B cell (primary cell): ENCODE measurements at regions of chr12 and their contacts with region 1.

Region 1: DNA sequence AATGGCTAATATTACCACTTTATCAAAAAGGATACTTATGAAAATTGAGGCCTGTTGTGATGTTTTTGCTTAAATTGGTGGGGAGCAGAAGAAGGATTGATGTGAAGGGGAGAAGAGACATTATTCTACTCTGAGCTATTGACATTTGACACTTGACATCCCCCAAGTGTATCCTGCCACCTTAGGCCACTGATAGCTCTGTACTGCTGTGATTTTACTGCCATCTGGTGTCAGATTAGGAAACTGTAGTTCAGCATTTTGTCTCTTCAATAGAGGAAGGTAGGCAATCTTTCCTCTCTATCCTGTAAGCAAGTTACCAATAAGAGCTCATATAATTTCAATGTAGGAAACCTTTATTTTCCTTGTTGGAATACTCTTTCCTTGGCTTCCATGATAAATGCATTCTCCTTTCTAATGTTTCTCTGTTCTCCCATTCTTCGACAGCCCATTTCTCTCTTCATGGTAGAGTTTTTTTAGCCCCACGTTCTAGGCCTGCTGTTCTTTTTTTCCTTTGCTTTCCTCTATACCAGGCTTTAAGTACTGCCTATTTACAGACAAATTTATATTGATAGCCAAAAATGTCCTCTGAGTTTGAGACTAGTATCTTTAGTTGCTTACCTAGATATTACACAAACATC is 46.3 kb downstream of the PPHLN1 start:
- DNase-seq: peak; percentile 76
- ATAC-seq: peak; percentile 92
- H3K4me3 ChIP-seq: no peak overlapping the region
- H3K4me3 Mint-ChIP-seq: no peak overlapping the region
- H3K27ac ChIP-seq: no peak overlapping the region
- H3K27ac Mint-ChIP-seq: no peak overlapping the region
- H3K4me1 ChIP-seq: peaks cover 4 to 5% of the 10 kb centered on the region in 2 donors
- H3K4me1 Mint-ChIP-seq: peaks cover 14% of the 10 kb centered on the region
- H3K27me3 ChIP-seq: no peaks in the 10 kb centered on the region
- H3K27me3 Mint-ChIP-seq: no peaks in the 10 kb centered on the region
- CTCF ChIP-seq: peak; percentile 89

Region 2: GRCh38 chr12:41277116-41277945 is 1094.9 kb before region 1 on chr12:
- CTCF ChIA-PET with region 1: interaction called, 23 read pairs
- POLR2A ChIA-PET with region 1: no interaction called
- intact Hi-C with region 1: loop called (anchors 1 kb)
- DNase-seq: peak; percentile 44
- ATAC-seq: no peak
- H3K4me3 ChIP-seq: no peak overlapping the region
- H3K4me3 Mint-ChIP-seq: no peak overlapping the region
- H3K27ac ChIP-seq: no peak overlapping the region
- H3K27ac Mint-ChIP-seq: no peak overlapping the region
- H3K4me1 ChIP-seq: peaks cover 0 to 13% of the 10 kb centered on the region in 2 donors
- H3K4me1 Mint-ChIP-seq: no peaks in the 10 kb centered on the region
- H3K27me3 ChIP-seq: no peaks in the 10 kb centered on the region
- H3K27me3 Mint-ChIP-seq: peaks cover 9% of the 10 kb centered on the region
- CTCF ChIP-seq: peak; percentile 73

Region 3: GRCh38 chr12:42076976-42077375 is 295.3 kb before region 1 on chr12:
- CTCF ChIA-PET with region 1: no interaction called
- POLR2A ChIA-PET with region 1: no interaction called
- intact Hi-C with region 1: no loop called
- DNase-seq: no peak
- ATAC-seq: no peak
- H3K4me3 ChIP-seq: no peak overlapping the region
- H3K4me3 Mint-ChIP-seq: no peak overlapping the region
- H3K27ac ChIP-seq: no peak overlapping the region
- H3K27ac Mint-ChIP-seq: no peak overlapping the region
- H3K4me1 ChIP-seq: no peaks in the 10 kb centered on the region
- H3K4me1 Mint-ChIP-seq: no peaks in the 10 kb centered on the region
- H3K27me3 ChIP-seq: no peaks in the 10 kb centered on the region
- H3K27me3 Mint-ChIP-seq: no peaks in the 10 kb centered on the region
- CTCF ChIP-seq: no peak

Region 4: DNA sequence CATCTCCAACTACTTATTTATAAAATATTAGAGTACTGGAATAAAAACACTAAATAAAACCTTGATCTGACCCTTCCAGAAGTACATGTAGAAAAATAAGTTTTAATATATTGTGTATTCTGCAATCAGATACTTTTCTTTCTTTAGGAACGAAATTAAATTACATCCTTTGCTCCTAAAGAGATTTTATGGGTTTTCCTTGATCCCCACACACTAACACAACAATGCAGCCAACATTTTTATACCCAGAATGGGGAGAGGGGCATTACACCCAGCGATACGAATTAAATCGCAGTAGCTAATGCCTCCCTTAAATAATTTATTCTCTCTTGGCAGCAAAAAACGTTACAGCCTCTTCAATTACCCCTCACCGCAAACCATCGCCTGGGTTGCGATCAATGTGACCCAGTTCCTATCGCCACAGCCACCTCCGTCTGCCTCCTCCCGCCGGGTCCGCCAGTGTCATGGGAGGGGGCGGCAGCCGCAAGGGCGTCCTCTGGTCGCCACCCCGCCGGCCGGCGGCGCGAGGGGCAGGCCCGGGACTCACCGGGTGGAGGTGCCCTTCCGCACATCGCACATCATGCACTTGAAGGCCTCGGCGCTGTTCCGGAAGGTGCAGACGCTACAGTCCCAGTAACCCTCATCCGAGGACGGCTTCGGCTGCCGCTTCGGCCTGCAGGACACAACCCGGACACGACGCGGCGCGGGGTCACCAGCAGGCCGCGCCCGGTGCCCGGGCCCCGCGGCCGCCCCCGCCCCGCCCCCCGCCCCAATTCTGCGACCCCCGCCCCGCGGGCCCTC is 135.0 kb before region 1 on chr12:
- CTCF ChIA-PET with region 1: no interaction called
- POLR2A ChIA-PET with region 1: no interaction called
- intact Hi-C with region 1: loop called (anchors 5 kb)
- DNase-seq: peak; percentile 84
- ATAC-seq: peak; percentile 74
- H3K4me3 ChIP-seq: peak overlapping the region; percentile 48 to 84 (median 66)
- H3K4me3 Mint-ChIP-seq: peak overlapping the region; percentile 98
- H3K27ac ChIP-seq: peak overlapping the region; percentile 28 to 74
- H3K27ac Mint-ChIP-seq: peak overlapping the region; percentile 95
- H3K4me1 ChIP-seq: peaks cover 15 to 27% of the 10 kb centered on the region in 2 donors
- H3K4me1 Mint-ChIP-seq: peaks cover 35% of the 10 kb centered on the region
- H3K27me3 ChIP-seq: no peaks in the 10 kb centered on the region
- H3K27me3 Mint-ChIP-seq: no peaks in the 10 kb centered on the region
- CTCF ChIP-seq: peak; percentile 53

Region 5: GRCh38 chr12:42284157-42284556 is 88.1 kb before region 1 on chr12:
- CTCF ChIA-PET with region 1: no interaction called
- POLR2A ChIA-PET with region 1: no interaction called
- intact Hi-C with region 1: no loop called
- DNase-seq: peak; percentile 19
- ATAC-seq: peak; percentile 17
- H3K4me3 ChIP-seq: no peak overlapping the region
- H3K4me3 Mint-ChIP-seq: no peak overlapping the region
- H3K27ac ChIP-seq: no peak overlapping the region
- H3K27ac Mint-ChIP-seq: no peak overlapping the region
- H3K4me1 ChIP-seq: peaks cover 6 to 8% of the 10 kb centered on the region in 2 donors
- H3K4me1 Mint-ChIP-seq: peaks cover 8% of the 10 kb centered on the region
- H3K27me3 ChIP-seq: peaks cover 0 to 2% (median 0%) of the 10 kb centered on the region in 4 experiments
- H3K27me3 Mint-ChIP-seq: peaks cover 17% of the 10 kb centered on the region
- CTCF ChIP-seq: no peak

Region 6: GRCh38 chr12:42346403-42347002 is 25.8 kb before region 1 on chr12:
- CTCF ChIA-PET with region 1: interaction called, 12 read pairs
- POLR2A ChIA-PET with region 1: no interaction called
- intact Hi-C with region 1: no loop called
- DNase-seq: no peak
- ATAC-seq: no peak
- H3K4me3 ChIP-seq: no peak overlapping the region
- H3K4me3 Mint-ChIP-seq: no peak overlapping the region
- H3K27ac ChIP-seq: no peak overlapping the region
- H3K27ac Mint-ChIP-seq: no peak overlapping the region
- H3K4me1 ChIP-seq: peaks cover 0 to 4% of the 10 kb centered on the region in 2 donors
- H3K4me1 Mint-ChIP-seq: peaks cover 29% of the 10 kb centered on the region
- H3K27me3 ChIP-seq: no peaks in the 10 kb centered on the region
- H3K27me3 Mint-ChIP-seq: no peaks in the 10 kb centered on the region
- CTCF ChIP-seq: no peak